Activated CD8-positive, alpha-beta memory T cell treated with anti-CD3 and anti-CD28 coated beads, Interleukin-2, amount 10 ng/mL, durations not matched to agents 7 days and 5 days (primary cell): ENCODE measurements at regions of chr13 and their contacts with region 1.

Region 1: DNA sequence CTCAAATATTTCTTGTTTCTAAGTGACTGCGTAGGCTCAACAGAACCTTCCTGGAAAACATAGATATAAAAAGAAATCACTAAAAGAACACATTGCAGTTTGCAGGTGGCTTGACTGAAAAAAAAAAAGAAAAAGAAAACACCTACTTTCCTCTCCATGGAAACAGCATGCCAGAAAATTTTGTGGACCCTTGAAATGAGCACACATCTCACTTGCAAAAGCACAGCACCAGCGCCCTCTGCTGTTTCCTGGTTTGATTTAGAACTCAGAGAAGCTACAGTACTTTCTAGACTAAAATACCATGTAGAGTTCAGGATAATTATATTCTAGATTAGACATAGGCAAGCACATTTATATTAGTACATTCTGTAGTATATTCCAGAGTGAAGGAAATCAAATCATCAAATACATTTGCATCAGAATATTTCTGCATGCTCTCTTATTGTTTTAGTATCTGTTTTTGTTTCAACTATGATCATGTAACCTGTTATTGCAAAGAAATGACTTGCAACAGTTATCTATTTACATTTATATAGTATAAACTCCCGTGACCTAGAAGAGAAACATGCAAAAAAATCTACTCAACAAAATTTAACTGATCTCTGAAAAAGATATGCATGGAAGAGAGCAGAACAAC is 22.3 kb upstream of the XPO4 start:
- DNase-seq: peak; percentile 84
- ATAC-seq: no peak
- H3K4me3 Mint-ChIP-seq: no peak overlapping the region
- H3K27ac Mint-ChIP-seq: no peak overlapping the region
- H3K4me1 Mint-ChIP-seq: no peaks in the 10 kb centered on the region
- H3K27me3 Mint-ChIP-seq: no peaks in the 10 kb centered on the region

Region 2: GRCh38 chr13:20495082-20496023 is 429.5 kb before region 1 on chr13:
- CTCF ChIA-PET with region 1: interaction called, 26 read pairs
- DNase-seq: peak; percentile 75
- ATAC-seq: peak; percentile 67
- H3K4me3 Mint-ChIP-seq: no peak overlapping the region
- H3K27ac Mint-ChIP-seq: no peak overlapping the region
- H3K4me1 Mint-ChIP-seq: peaks cover 3% of the 10 kb centered on the region
- H3K27me3 Mint-ChIP-seq: no peaks in the 10 kb centered on the region

Region 3: GRCh38 chr13:20713751-20714150 is 211.1 kb before region 1 on chr13:
- CTCF ChIA-PET with region 1: interaction called, 19 read pairs
- DNase-seq: no peak
- ATAC-seq: no peak
- H3K4me3 Mint-ChIP-seq: no peak overlapping the region
- H3K27ac Mint-ChIP-seq: no peak overlapping the region
- H3K4me1 Mint-ChIP-seq: peaks cover 7% of the 10 kb centered on the region
- H3K27me3 Mint-ChIP-seq: peaks cover 21% of the 10 kb centered on the region